K562 (cell line): ENCODE measurements at regions of chr15 and their contacts with region 1.

Region 1: DNA sequence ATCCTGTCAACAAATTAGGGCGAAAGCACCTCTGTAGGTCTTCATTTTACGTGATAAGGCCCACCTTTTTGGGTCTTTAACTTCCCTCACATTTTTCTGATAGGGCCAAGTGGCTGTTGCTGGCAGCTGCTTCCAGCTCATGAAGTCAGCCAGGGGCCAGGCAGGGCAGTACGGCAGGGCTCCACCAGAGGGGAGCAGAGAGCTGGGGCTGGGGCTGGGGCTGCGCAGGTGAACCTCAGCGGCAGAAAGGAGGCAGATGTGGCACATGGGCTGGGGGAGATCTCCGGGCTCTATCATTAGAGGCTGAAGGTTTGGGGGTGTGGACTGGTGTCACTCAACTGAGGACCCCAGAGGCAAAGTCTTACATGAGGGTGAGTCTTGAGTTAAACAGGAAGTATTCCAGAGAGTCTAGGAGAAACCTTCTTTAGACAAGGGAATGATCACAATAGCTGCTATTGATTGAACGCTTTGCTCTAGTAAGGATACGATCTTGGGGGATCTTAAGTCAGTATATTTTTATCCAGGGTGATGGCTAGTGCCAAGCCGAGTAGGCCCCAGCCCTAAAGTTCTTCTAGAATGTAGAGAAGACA is 62.8 kb upstream of the MEX3B start:
- DNase-seq: peak; percentile 78 to 88 (median 85)
- ATAC-seq: peak; percentile 97
- H3K4me3 ChIP-seq: no peak overlapping the region
- H3K27ac ChIP-seq: no peak overlapping the region
- H3K4me1 ChIP-seq: peaks cover 5 to 15% of the 10 kb centered on the region in 2 experiments; a peak in 4 of 5 replicates
- H3K27me3 ChIP-seq: peaks cover 8 to 17% of the 10 kb centered on the region in 2 experiments; a peak in 4 of 5 replicates
- CTCF ChIP-seq: peak; percentile 86 to 98 (median 87)
- EP300 ChIP-seq: no peak
- POLR2A ChIP-seq: no peak
- RAD21 ChIP-seq: peak; percentile 79 to 92

Region 2: GRCh38 chr15:81966631-81967030 is 142.0 kb before region 1 on chr15:
- CTCF ChIA-PET with region 1: no interaction called
- POLR2A ChIA-PET with region 1: no interaction called
- in situ Hi-C with region 1: no loop called
- intact Hi-C with region 1: no loop called
- DNase-seq: no peak
- ATAC-seq: no peak
- H3K4me3 ChIP-seq: no peak overlapping the region
- H3K27ac ChIP-seq: no peak overlapping the region
- H3K4me1 ChIP-seq: no peaks in the 10 kb centered on the region
- H3K27me3 ChIP-seq: no peaks in the 10 kb centered on the region
- CTCF ChIP-seq: no peak
- EP300 ChIP-seq: no peak
- POLR2A ChIP-seq: no peak
- RAD21 ChIP-seq: no peak

Region 3: DNA sequence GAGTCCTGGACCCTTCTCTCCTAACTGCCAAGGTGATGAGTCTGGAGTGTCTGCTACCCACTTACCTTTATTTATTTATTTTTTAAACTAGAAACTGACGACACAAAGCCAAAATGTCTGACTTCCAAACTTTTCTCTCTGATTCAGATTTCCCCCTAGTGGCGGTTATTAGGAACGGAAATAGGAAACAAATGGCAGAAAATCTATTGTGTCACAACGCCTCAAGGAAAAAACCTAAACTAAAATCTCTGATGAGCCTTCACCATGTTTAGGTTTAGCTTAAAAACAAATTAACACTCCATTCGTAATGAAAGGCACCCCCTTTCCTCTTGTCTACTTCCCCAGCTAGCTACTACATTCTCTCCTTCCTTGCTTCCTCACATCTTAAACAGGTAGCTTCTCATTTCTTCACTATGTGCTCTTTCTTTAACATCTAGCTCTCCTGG is 31.3 kb after region 1 on chr15:
- CTCF ChIA-PET with region 1: interaction called, 3 read pairs
- POLR2A ChIA-PET with region 1: no interaction called
- in situ Hi-C with region 1: no loop called
- intact Hi-C with region 1: loop called (anchors 1 kb)
- DNase-seq: peak; percentile 29 to 39 (median 36)
- ATAC-seq: peak; percentile 77
- H3K4me3 ChIP-seq: no peak overlapping the region
- H3K27ac ChIP-seq: no peak overlapping the region
- H3K4me1 ChIP-seq: peaks cover 0 to 2% of the 10 kb centered on the region in 2 experiments; a peak in 2 of 5 replicates
- H3K27me3 ChIP-seq: no peaks in the 10 kb centered on the region
- CTCF ChIP-seq: peak; percentile 53 to 76 (median 65); a peak in 5 of 6 replicates
- EP300 ChIP-seq: no peak
- POLR2A ChIP-seq: no peak
- RAD21 ChIP-seq: peak; percentile 51 to 63; a peak in 3 of 4 replicates

Region 4: DNA sequence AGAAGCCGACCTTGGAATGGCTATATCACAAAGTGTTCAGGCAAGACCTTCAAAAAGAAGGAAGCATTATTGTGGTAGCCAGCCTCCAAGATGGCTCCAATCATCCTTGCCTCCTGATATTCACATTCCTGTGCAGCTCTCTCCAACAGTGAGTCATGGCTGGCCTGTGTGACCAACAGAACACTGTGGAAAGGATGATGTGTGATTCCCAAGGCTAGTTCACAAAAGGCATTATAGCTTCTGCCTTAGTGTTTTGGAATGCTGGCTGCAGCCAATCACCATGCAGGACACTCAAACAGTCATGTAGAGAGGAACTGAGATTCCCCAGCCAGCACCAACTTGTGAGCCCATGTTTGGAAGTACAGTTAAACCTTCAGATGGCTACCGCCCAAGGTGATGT is 51.3 kb after region 1 on chr15:
- CTCF ChIA-PET with region 1: no interaction called
- POLR2A ChIA-PET with region 1: no interaction called
- in situ Hi-C with region 1: no loop called
- intact Hi-C with region 1: no loop called
- DNase-seq: no peak
- ATAC-seq: no peak
- H3K4me3 ChIP-seq: no peak overlapping the region
- H3K27ac ChIP-seq: no peak overlapping the region
- H3K4me1 ChIP-seq: no peaks in the 10 kb centered on the region
- H3K27me3 ChIP-seq: no peaks in the 10 kb centered on the region
- CTCF ChIP-seq: no peak
- EP300 ChIP-seq: no peak
- POLR2A ChIP-seq: no peak
- RAD21 ChIP-seq: no peak